ENCODE measurements at regions of chr11 and their contacts with region 1.

Region 1: GRCh38 chr11:19769820-19770219 is 57.2 kb downstream of the NAV2 start:
- DNase-seq: no peak
- ATAC-seq: no peak

Region 2: DNA sequence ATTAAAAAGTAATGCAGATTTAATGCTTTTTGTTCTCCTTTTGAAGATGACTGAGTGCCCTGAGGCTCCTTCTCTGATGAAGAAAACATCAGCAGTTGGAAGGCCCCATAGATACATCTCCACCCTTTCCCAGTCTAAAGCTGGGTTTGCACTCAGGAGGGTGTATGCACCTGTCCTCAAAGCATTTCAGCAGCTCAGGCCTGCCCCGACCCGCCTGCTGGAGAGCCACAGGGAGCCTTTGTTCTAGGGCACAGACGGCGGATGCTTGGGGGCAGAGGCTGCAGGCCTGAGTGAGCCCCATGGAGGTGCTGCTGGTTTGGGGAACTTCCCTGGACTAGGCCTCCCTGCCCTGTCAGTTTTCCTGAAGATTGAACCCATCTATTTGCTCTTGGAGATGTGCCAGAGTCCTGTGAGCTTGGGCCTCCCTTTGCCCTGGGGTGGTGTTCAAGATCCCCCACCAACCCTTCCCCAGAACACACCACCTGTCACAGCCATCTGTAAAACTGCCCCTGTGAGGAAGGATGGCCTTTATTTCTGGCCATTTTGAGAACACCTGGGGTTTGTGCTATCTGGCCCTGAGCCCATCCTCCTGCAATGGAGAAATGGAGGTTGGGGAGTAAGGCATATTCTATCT is 102.8 kb after region 1 on chr11:
- intact Hi-C with region 1: loop called (anchors 10 kb)
- DNase-seq: no peak
- ATAC-seq: no peak